ENCODE measurements at regions of chr21 and their contacts with region 1.

Region 1: DNA sequence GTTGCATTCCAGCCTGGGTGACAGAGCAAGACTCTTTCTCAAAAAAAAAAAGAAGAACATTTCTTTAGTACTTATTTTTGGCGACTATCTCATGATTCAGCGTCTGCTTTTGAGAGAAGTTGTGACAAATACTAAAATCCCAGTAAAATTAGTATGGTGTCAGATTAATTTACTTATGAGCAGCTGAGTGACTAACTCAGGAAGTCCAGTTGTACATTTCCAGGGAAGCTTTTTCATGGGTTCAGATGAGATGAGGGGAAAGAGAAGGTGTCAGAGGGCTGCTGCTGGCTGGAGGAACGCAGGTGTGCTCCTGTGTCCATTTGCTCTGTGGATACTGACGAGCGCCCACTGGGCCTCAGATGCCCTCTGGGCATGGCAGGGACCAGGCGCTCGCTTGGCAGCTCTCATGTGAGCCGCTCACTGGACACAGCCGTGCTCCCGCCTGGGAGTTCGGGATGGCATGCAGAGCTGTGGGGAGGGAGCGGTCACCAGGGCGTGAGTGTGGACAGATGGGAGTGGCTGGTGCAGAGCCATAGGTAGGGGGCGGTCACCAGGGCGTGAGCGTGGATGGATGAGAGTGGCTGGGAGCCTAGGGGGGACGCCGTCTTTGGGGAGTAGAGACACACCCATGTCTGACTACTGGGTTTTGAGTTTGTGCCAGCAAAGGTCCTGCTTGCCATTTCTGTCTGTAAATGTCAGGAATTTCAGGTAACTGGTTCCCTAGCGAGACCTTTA is 55.0 kb downstream of the ADARB1 start:
- DNase-seq: peak in 1 of 4 donors; percentile 76
- ATAC-seq: peak; percentile 25
- H3K4me3 ChIP-seq: no peak overlapping the region
- H3K27ac ChIP-seq: peak overlapping the region; percentile 46 to 76
- H3K4me1 ChIP-seq: peaks cover 17 to 57% of the 10 kb centered on the region in 2 donors
- H3K27me3 ChIP-seq: no peaks in the 10 kb centered on the region
- CTCF ChIP-seq: no peak

Region 2: GRCh38 chr21:44949779-44950198 is 179.6 kb before region 1 on chr21:
- intact Hi-C with region 1: loop called (anchors 5 to 10 kb)
- DNase-seq: peak; percentile 53 to 97 (median 82)
- ATAC-seq: peak; percentile 95
- H3K4me3 ChIP-seq: no peak overlapping the region
- H3K27ac ChIP-seq: no peak overlapping the region
- H3K4me1 ChIP-seq: peaks cover 0 to 15% of the 10 kb centered on the region in 2 donors
- H3K27me3 ChIP-seq: no peaks in the 10 kb centered on the region
- CTCF ChIP-seq: peak; percentile 89 to 96

Region 3: GRCh38 chr21:45357436-45358260 is 228.3 kb after region 1 on chr21:
- intact Hi-C with region 1: no loop called
- DNase-seq: peak in 3 of 4 donors; percentile 63 to 79 (median 72)
- ATAC-seq: peak; percentile 21
- H3K4me3 ChIP-seq: no peak overlapping the region
- H3K27ac ChIP-seq: no peak overlapping the region
- H3K4me1 ChIP-seq: peaks cover 0 to 3% of the 10 kb centered on the region in 2 donors
- H3K27me3 ChIP-seq: peaks cover 0 to 11% of the 10 kb centered on the region in 2 donors
- CTCF ChIP-seq: no peak